ENCODE measurements at regions of chr18 and their contacts with region 1.

Region 1: GRCh38 chr18:2302614-2303516 is 268.4 kb downstream of the METTL4 start:
- DNase-seq: peak; percentile 93
- ATAC-seq: peak; percentile 78
- H3K4me3 ChIP-seq: peak overlapping the region; percentile 44
- H3K27ac ChIP-seq: peak overlapping the region; percentile 93
- H3K4me1 ChIP-seq: peaks cover 51% of the 10 kb centered on the region
- H3K27me3 ChIP-seq: no peaks in the 10 kb centered on the region
- CTCF ChIP-seq: no peak

Region 2: GRCh38 chr18:2104620-2105462 is 198.0 kb before region 1 on chr18:
- CTCF ChIA-PET with region 1: no interaction called
- POLR2A ChIA-PET with region 1: no interaction called
- intact Hi-C with region 1: loop called (anchors 5 kb)
- DNase-seq: peak; percentile 64
- ATAC-seq: peak; percentile 94
- H3K4me3 ChIP-seq: no peak overlapping the region
- H3K27ac ChIP-seq: no peak overlapping the region
- H3K4me1 ChIP-seq: 0 out of 2 replicates have a peak, but pooled peaks cover 7% of the 10 kb centered on the region
- H3K27me3 ChIP-seq: no peaks in the 10 kb centered on the region
- CTCF ChIP-seq: peak; percentile 95

Region 3: GRCh38 chr18:2237706-2238105 is 65.2 kb before region 1 on chr18:
- CTCF ChIA-PET with region 1: no interaction called
- POLR2A ChIA-PET with region 1: no interaction called
- intact Hi-C with region 1: loop called (anchors 5 kb)
- DNase-seq: no peak
- ATAC-seq: no peak
- H3K4me3 ChIP-seq: no peak overlapping the region
- H3K27ac ChIP-seq: no peak overlapping the region
- H3K4me1 ChIP-seq: peaks cover 16% of the 10 kb centered on the region
- H3K27me3 ChIP-seq: no peaks in the 10 kb centered on the region
- CTCF ChIP-seq: no peak

Region 4: GRCh38 chr18:2411381-2411960 is 108.6 kb after region 1 on chr18:
- CTCF ChIA-PET with region 1: no interaction called
- POLR2A ChIA-PET with region 1: no interaction called
- intact Hi-C with region 1: loop called (anchors 2 kb)
- DNase-seq: peak; percentile 89
- ATAC-seq: peak; percentile 89
- H3K4me3 ChIP-seq: peak overlapping the region; percentile 38; the same call in 1 of the 2 replicates
- H3K27ac ChIP-seq: peak overlapping the region; percentile 91
- H3K4me1 ChIP-seq: peaks cover 43% of the 10 kb centered on the region
- H3K27me3 ChIP-seq: no peaks in the 10 kb centered on the region
- CTCF ChIP-seq: no peak

Region 5: DNA sequence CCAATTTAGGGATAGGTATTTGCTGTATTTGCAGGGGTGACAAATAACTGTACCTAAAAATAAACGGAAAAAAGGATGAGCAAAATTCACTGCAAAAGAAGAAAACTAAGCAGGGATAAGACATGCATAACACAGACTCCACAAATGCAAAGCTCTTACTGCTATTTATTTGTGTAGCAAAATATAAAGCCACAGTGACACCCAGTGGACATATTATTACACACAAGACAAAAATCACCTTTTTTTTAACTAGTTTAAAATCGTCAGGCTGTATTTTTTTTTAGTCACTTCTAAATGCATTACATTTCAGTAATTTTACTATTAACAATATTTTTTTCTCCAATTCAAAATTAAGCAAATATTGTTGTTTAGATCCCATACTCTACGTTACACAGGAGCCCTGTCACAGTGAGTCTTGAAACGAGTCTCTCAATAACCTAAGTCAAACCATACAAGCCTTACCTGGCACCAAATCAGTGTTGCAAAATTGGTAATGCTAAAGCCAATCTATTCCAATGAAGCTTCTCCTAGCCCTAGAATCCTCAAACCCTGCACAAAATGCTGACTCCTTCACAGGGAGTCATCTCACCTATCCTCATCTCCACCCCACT is 244.7 kb after region 1 on chr18:
- CTCF ChIA-PET with region 1: no interaction called
- POLR2A ChIA-PET with region 1: no interaction called
- intact Hi-C with region 1: loop called (anchors 1 kb)
- DNase-seq: peak; percentile 75
- ATAC-seq: peak; percentile 80
- H3K4me3 ChIP-seq: no peak overlapping the region
- H3K27ac ChIP-seq: no peak overlapping the region
- H3K4me1 ChIP-seq: no peaks in the 10 kb centered on the region
- H3K27me3 ChIP-seq: no peaks in the 10 kb centered on the region
- CTCF ChIP-seq: peak; percentile 80